Heart left ventricle (tissue), 16 donors: ENCODE measurements at regions of chr7 and their contacts with region 1.

Region 1: GRCh38 chr7:133095119-133095671 is 13.3 kb upstream of the CHCHD3 start:
- DNase-seq: no peak
- ATAC-seq: no peak
- H3K4me3 ChIP-seq: no peak overlapping the region
- H3K27ac ChIP-seq: no peak overlapping the region
- H3K4me1 ChIP-seq: peaks cover 0 to 5% (median 0%) of the 10 kb centered on the region in 12 donors
- H3K27me3 ChIP-seq: no peaks in the 10 kb centered on the region
- CTCF ChIP-seq: no peak
- POLR2A ChIP-seq: no peak

Region 2: DNA sequence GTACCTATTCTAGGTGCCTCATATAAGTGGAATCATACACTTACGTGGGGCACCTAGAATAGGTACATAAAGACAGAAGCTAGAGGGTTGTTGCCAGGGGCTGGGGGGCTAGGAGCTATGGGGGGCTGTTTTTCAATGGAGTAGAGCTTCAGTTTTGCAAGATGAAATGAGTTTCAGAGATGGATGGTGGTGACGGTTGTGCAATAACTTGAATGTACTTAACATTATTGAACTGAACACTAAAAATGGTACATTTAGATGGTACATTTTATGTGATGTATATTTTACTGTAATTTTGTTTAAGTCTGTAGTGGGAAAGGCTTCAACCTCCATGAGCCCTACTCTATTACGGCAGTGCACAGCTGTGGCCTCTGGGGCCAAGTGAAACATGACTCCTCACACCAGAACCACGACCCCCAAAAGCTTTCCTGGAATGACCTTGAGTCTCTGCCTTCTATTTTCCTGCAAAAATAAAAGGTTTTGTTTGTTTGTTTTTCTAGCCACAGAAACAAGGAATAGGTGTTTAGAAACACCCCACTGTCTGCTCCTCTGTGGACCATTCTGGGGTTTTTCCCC is 371.6 kb before region 1 on chr7:
- intact Hi-C with region 1: loop called in 1 of 10 experiments (anchors 5 kb)
- DNase-seq: no peak
- ATAC-seq: no peak
- H3K4me3 ChIP-seq: no peak overlapping the region
- H3K27ac ChIP-seq: no peak overlapping the region
- H3K4me1 ChIP-seq: no peaks in the 10 kb centered on the region
- H3K27me3 ChIP-seq: no peaks in the 10 kb centered on the region
- CTCF ChIP-seq: no peak
- POLR2A ChIP-seq: no peak

Region 3: DNA sequence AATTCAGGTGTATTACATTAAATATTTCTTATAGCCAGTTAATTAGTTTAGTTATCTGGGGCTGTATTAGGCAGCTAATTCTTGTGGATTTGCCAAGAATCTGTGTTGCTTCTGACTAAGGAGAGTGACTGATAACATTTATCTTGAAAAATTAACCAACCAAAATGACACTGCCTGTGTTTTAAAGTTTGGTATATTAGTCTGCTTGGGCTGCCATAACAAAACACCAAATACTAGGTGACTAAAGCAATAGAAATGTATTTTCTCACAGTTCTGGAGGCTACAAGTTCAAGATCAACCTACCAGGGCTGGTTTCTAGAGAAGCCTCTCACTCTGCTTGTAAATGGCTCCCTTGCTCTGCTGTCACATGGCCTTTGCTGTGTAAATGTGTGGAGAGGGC is 170.6 kb after region 1 on chr7:
- intact Hi-C with region 1: no loop called
- DNase-seq: no peak
- ATAC-seq: no peak
- H3K4me3 ChIP-seq: no peak overlapping the region
- H3K27ac ChIP-seq: no peak overlapping the region
- H3K4me1 ChIP-seq: peaks cover 0 to 26% (median 2%) of the 10 kb centered on the region in 12 donors
- H3K27me3 ChIP-seq: no peaks in the 10 kb centered on the region
- CTCF ChIP-seq: no peak
- POLR2A ChIP-seq: no peak